Panc1 (cell line): ENCODE measurements at regions of chr18 and their contacts with region 1.

Region 1: DNA sequence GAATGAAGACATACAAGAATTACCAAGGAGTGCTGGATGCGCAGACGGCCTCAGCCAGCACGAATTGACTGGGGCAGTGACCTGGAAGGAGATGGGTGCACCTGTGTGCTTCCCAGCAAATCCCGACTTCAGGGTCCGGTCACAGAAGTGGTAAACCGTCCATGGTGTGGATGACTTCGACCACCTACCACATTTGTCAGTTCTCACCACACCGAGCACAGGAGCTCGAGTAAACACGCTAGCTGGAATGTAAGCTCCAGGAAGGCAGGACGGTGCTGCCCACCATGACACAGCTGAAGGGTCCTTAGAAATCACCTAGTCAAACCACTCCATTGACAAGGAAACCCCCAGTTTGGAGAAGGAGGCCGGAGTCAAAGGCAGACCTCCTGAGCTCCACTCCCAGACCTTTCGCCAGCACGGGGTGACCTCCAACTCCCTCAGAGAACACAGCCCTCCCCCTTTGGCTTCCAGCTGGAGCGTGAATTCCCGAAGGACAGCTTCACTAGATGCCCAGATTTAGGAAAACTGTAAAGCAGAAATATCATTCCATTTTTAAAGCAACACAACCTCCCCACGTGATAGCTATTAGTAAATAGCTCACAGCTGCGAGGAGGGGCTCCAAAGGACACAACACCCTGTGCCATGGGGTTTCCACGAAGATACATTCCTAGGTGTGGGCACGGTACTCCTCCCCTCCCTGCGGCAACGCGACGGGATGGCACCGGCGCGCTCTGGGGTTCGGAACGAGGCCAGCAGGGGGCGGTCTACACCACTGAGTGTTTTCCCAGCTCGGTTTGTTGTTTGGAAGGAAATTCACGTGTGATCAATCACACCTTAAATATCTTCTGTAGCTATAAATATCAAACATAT is 34.1 kb upstream of the GNAL start:
- DNase-seq: peak; percentile 17
- ATAC-seq: peak; percentile 86
- H3K4me3 ChIP-seq: no peak overlapping the region
- H3K27ac ChIP-seq: no peak overlapping the region
- H3K4me1 ChIP-seq: no peaks in the 10 kb centered on the region
- H3K27me3 ChIP-seq: peaks cover 8% of the 10 kb centered on the region; the same call in 1 of the 2 replicates
- CTCF ChIP-seq: peak; percentile 90

Region 2: DNA sequence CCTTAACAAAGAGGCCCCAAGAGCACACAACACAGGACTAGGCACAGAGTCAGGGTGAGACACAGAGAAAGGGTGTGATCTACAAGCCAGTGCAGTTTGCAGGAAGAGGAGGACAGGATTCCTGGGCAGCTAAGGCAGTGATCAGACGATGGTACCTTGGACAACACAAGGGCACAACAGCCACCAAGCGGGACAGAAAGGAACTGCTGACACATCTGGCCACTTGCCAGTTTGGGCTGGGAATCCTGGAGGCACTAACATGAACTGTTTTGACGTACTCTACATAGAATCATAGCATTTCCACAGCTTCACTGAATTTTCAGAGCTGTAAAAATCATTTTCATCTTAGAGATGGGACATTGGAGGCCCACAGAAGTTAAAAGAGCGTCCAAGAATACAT is 267.1 kb before region 1 on chr18:
- CTCF ChIA-PET with region 1: no interaction called
- POLR2A ChIA-PET with region 1: no interaction called
- in situ Hi-C with region 1: no loop called
- intact Hi-C with region 1: no loop called
- DNase-seq: peak; percentile 2
- ATAC-seq: no peak
- H3K4me3 ChIP-seq: no peak overlapping the region
- H3K27ac ChIP-seq: no peak overlapping the region
- H3K4me1 ChIP-seq: no peaks in the 10 kb centered on the region
- H3K27me3 ChIP-seq: no peaks in the 10 kb centered on the region
- CTCF ChIP-seq: no peak; the same call in 1 of the 2 replicates

Region 3: GRCh38 chr18:12038639-12039417 is 383.9 kb after region 1 on chr18:
- CTCF ChIA-PET with region 1: no interaction called
- POLR2A ChIA-PET with region 1: no interaction called
- in situ Hi-C with region 1: no loop called
- intact Hi-C with region 1: loop called (anchors 10 kb)
- DNase-seq: peak; percentile 57
- ATAC-seq: peak; percentile 98
- H3K4me3 ChIP-seq: peak overlapping the region; percentile 49 to 53
- H3K27ac ChIP-seq: peak overlapping the region; percentile 63; the same call in 1 of the 2 replicates
- H3K4me1 ChIP-seq: no peaks in the 10 kb centered on the region
- H3K27me3 ChIP-seq: no peaks in the 10 kb centered on the region
- CTCF ChIP-seq: peak; percentile 98